Left ventricle myocardium superior (tissue), 1 donor: ENCODE measurements at regions of chr9 and their contacts with region 1.

Region 1: DNA sequence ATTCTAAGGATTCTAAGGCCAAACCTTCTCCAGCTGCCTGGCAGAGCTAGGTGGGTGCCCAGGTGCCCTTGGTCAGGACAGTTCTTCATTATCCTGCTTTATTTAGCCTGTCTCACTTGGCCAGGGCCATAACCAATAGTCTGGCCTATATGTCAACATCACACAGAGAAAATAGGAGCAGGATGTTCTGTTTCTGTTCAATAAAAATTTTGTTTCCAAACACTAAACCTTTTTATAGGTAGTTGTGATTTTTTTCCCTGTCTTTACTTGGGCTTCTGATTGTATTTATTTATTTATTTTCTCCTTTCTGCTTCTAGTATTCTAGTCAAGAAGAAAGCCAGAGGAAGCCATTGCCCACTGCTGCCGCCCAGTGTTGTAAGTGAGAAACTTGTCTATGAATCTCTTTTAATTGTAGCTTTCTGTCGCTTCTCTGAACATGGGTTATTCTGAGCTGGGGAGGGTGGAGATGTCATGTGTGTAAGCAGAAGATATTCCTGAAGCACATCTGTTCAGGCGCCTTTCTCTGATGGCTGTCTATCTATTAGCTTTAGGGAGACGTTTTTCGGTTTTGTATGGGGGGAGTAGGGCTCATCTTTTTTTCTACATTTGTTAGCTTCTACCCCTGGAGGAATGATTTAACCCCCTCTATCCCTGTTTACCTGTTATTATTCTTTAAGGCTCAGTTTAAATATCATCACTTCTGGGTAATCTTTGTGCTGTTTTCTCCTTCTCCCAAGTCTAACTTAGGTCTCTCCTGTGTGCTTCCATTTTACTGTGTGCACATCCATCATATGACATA is 97.1 kb downstream of the UNC13B start:
- DNase-seq: peak; percentile 81
- ATAC-seq: peak; percentile 75

Region 2: GRCh38 chr9:34222451-34222850 is 1036.4 kb before region 1 on chr9:
- intact Hi-C with region 1: no loop called
- DNase-seq: no peak
- ATAC-seq: peak; percentile 34

Region 3: GRCh38 chr9:34576597-34577399 is 682.1 kb before region 1 on chr9:
- intact Hi-C with region 1: no loop called
- DNase-seq: no peak
- ATAC-seq: no peak

Region 4: DNA sequence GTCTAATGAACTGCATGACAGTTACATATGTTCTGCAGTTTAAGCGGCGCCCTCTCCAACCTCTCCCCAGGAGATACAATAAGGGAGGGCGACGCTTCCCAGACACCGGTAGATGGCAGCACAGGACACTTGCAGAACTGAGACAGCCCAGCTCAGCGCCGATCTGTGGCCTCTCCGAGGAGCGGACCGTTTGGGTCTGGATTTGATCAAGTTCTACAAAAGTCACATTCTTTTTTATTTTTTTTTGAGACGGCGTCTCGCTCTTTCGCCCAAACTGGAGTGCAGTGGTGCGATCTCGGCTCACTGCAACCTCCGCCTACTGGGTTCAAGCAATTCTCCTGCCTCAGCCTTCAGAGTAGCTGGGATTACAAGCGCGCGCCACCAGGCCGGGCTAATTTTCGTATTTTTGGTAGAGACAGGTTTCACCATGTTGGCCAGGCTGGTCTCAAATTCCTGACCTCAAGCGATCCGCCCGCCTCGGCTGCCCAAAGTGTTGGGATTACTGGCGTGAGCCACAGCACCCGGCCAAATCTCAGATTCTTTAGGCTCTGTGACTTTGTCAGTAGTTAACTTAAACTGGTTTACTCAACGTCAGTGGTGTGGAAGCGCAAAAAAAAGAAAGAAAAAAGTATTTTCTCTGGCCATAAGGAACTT is 141.8 kb before region 1 on chr9:
- intact Hi-C with region 1: loop called (anchors 5 kb)
- DNase-seq: peak; percentile 91
- ATAC-seq: peak; percentile 79

Region 5: GRCh38 chr9:35306283-35306682 is 47.4 kb after region 1 on chr9:
- intact Hi-C with region 1: no loop called
- DNase-seq: no peak
- ATAC-seq: no peak